ENCODE measurements at regions of chr2 and their contacts with region 1.

Region 1: DNA sequence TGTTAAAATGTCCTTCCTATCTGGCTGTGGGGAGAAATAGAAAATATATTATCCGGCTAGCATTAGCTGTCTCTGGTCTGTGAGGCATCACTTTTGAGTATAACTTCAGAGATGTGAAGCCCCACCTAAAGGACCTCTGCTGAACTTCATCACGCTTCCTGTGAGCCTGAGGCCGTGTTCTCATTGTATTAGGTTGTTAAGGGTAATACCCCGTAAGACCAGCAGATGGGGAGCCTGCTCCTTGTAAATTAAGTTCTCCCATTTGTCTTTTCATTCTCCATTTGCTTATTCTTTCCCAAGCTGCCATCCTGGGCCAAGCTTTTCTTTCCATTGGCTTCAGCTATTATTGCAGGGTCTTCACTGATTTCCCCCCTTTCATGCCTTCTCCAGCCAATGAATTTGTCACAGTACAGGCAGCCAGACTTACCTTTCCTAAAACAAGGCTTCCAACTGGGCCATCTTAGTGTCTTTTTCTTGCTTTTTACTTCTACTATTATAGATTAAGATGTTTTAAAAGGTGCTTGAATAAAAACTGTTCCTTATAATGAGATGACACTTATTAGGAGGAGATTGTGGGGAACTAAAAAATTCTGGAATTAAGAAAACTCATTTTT is 12.4 kb downstream of the NIF3L1 start:
- DNase-seq: peak; percentile 87
- ATAC-seq: peak; percentile 92
- H3K4me3 ChIP-seq: no peak overlapping the region
- H3K27ac ChIP-seq: no peak overlapping the region
- H3K4me1 ChIP-seq: peaks cover 0 to 5% of the 10 kb centered on the region in 2 experiments; a peak in 1 of 4 replicates
- H3K27me3 ChIP-seq: no peaks in the 10 kb centered on the region
- CTCF ChIP-seq: peak; percentile 73 to 97 (median 85)
- POLR2A ChIP-seq: no peak
- RAD21 ChIP-seq: peak; percentile 89

Region 2: GRCh38 chr2:201071479-201072200 is 170.1 kb after region 1 on chr2 and contains the starts of genes HYCC2 and NDUFB3:
- CTCF ChIA-PET with region 1: interaction called, 55 read pairs
- POLR2A ChIA-PET with region 1: interaction called, 3 read pairs
- RAD21 ChIA-PET with region 1: interaction called, 5 to 10 read pairs
- intact Hi-C with region 1: loop called (anchors 1 kb)
- DNase-seq: peak; percentile 92
- ATAC-seq: peak; percentile 94
- H3K4me3 ChIP-seq: peak within 1 kb of the TSS; percentile 77 to 93
- H3K27ac ChIP-seq: peak within 1 kb of the TSS; percentile 64
- H3K4me1 ChIP-seq: peaks cover 4 to 18% of the 10 kb centered on the region in 2 experiments; a peak in 3 of 4 replicates
- H3K27me3 ChIP-seq: no peaks in the 10 kb centered on the region
- CTCF ChIP-seq: 0 out of 6 replicates have a peak, but pooled peaks of 2 of the 3 experiments have one; percentile 10 to 11
- POLR2A ChIP-seq: peak; percentile 77
- RAD21 ChIP-seq: no peak
- total RNA-seq, gene HYCC2: 9.9 TPM
- total RNA-seq, gene NDUFB3: 94.6 TPM

Region 3: GRCh38 chr2:201182650-201183364 is 281.2 kb after region 1 on chr2 and contains the start of gene CASP10:
- CTCF ChIA-PET with region 1: interaction called, 13 read pairs
- POLR2A ChIA-PET with region 1: interaction called, 3 read pairs
- RAD21 ChIA-PET with region 1: interaction called, 4 to 6 read pairs
- intact Hi-C with region 1: no loop called
- DNase-seq: peak; percentile 53
- ATAC-seq: peak; percentile 85
- H3K4me3 ChIP-seq: peak within 1 kb of the TSS; percentile 16 to 39
- H3K27ac ChIP-seq: no peak within 1 kb of the TSS
- H3K4me1 ChIP-seq: peaks cover 0 to 13% of the 10 kb centered on the region in 2 experiments; a peak in 2 of 4 replicates
- H3K27me3 ChIP-seq: no peaks in the 10 kb centered on the region
- CTCF ChIP-seq: peak; percentile 28 to 63 (median 51); a peak in 4 of 6 replicates
- POLR2A ChIP-seq: peak; percentile 33
- RAD21 ChIP-seq: peak; percentile 82
- total RNA-seq, gene CASP10: 2.6 TPM

Region 4: GRCh38 chr2:201363857-201364560 is 462.4 kb after region 1 on chr2:
- CTCF ChIA-PET with region 1: no interaction called
- POLR2A ChIA-PET with region 1: no interaction called
- RAD21 ChIA-PET with region 1: no interaction called
- intact Hi-C with region 1: loop called (anchors 10 kb)
- DNase-seq: peak; percentile 24
- ATAC-seq: peak; percentile 85
- H3K4me3 ChIP-seq: no peak overlapping the region
- H3K27ac ChIP-seq: no peak overlapping the region
- H3K4me1 ChIP-seq: peaks cover 9 to 20% of the 10 kb centered on the region in 2 experiments
- H3K27me3 ChIP-seq: no peaks in the 10 kb centered on the region
- CTCF ChIP-seq: peak; percentile 82 to 94 (median 91)
- POLR2A ChIP-seq: no peak
- RAD21 ChIP-seq: peak; percentile 95